ENCODE measurements at regions of chr3 and their contacts with region 1.

Region 1: GRCh38 chr3:122942937-122943827 is 84.4 kb downstream of the SEMA5B start:
- DNase-seq: peak; percentile 66
- H3K4me3 ChIP-seq: no peak overlapping the region
- H3K27ac ChIP-seq: no peak overlapping the region
- H3K4me1 ChIP-seq: peaks cover 37% of the 10 kb centered on the region
- H3K27me3 ChIP-seq: peaks cover 31% of the 10 kb centered on the region
- CTCF ChIP-seq: peak; percentile 87

Region 2: GRCh38 chr3:122982216-122983185 is 39.3 kb after region 1 on chr3:
- CTCF ChIA-PET with region 1: no interaction called
- POLR2A ChIA-PET with region 1: no interaction called
- intact Hi-C with region 1: loop called (anchors 5 kb)
- DNase-seq: peak; percentile 92
- H3K4me3 ChIP-seq: no peak overlapping the region
- H3K27ac ChIP-seq: no peak overlapping the region
- H3K4me1 ChIP-seq: peaks cover 19% of the 10 kb centered on the region
- H3K27me3 ChIP-seq: peaks cover 63% of the 10 kb centered on the region
- CTCF ChIP-seq: no peak

Region 3: DNA sequence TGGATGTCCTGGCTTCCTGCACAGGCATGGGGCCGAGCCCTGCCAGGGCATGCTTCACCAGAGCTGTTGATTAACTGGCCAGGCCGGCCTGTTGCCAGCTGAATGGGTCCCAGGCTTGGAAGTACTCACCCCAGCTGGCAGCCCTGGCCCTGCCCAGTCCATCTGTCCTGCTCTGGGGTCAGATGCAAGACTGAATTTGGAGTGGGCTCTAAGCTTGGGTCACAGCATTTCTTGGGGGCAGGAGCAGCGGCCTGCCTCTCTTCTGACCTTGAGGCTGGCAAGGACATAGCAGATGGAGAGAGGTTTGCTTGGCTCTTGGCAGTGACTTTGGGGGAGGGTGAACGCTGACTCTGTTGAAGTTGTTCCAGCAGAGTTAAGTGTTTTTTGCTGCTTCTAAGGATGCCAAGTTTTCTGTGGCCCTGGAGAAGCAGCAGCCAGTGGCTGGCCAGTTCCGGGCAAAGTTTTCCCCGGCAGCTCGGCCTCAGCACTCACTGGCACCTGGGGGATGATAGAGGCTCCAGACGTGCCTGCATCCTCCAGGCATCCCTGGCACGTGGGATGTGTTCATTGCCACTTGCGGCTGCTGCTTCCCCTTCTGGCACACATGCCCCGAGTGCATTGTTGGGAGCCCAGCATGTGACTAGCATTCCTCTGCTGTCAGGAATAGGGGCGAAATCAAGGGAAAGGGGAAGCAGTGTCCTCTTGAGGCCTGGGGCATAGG is 146.6 kb after region 1 on chr3:
- CTCF ChIA-PET with region 1: no interaction called
- POLR2A ChIA-PET with region 1: interaction called, 12 read pairs
- intact Hi-C with region 1: no loop called
- DNase-seq: no peak
- H3K4me3 ChIP-seq: no peak overlapping the region
- H3K27ac ChIP-seq: no peak overlapping the region
- H3K4me1 ChIP-seq: peaks cover 13% of the 10 kb centered on the region
- H3K27me3 ChIP-seq: no peaks in the 10 kb centered on the region
- CTCF ChIP-seq: no peak

Region 4: DNA sequence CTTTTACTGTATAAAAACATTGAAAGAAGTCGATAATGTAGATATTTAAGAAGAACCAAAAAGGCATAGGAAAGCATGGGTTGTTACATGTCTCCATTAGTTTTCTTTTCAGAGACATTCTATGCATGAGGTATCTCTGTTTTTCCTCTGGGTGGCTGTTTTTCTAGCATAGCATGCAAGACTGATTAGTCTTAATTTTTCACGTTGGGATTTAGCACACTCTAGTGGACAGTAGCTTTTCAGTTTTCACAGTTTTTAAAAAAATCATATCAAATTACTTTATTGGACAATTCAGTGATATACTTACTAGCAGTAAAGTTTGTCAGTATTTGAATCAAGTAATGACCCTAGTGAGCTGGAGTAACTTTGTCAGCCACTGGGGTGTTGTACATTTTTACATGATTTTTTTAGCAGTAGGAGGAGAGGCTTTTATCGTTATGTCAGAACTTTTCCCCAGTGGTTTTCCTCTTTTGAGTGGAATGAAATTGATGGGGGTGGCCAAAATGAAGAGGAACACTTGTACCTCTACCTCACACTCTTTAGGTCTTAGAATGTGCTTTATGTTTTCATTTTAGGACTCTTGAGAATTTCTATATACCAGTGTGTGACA is 315.7 kb after region 1 on chr3:
- CTCF ChIA-PET with region 1: interaction called, 4 read pairs
- POLR2A ChIA-PET with region 1: no interaction called
- intact Hi-C with region 1: loop called (anchors 5 kb)
- DNase-seq: peak; percentile 80
- H3K4me3 ChIP-seq: no peak overlapping the region
- H3K27ac ChIP-seq: no peak overlapping the region
- H3K4me1 ChIP-seq: peaks cover 21% of the 10 kb centered on the region
- H3K27me3 ChIP-seq: no peaks in the 10 kb centered on the region
- CTCF ChIP-seq: peak; percentile 79

Measured in A673 (cell line).